ENCODE measurements at regions of chrX and their contacts with region 1.

Region 1: GRCh38 chrX:43958529-43958928 is 14.7 kb downstream of the NDP start:
- DNase-seq: peak; percentile 77
- H3K4me3 ChIP-seq: no peak overlapping the region
- H3K27ac ChIP-seq: no peak overlapping the region
- H3K4me1 ChIP-seq: no peaks in the 10 kb centered on the region
- H3K27me3 ChIP-seq: no peaks in the 10 kb centered on the region
- CTCF ChIP-seq: peak; percentile 54 to 56
- POLR2A ChIP-seq: no peak

Region 2: DNA sequence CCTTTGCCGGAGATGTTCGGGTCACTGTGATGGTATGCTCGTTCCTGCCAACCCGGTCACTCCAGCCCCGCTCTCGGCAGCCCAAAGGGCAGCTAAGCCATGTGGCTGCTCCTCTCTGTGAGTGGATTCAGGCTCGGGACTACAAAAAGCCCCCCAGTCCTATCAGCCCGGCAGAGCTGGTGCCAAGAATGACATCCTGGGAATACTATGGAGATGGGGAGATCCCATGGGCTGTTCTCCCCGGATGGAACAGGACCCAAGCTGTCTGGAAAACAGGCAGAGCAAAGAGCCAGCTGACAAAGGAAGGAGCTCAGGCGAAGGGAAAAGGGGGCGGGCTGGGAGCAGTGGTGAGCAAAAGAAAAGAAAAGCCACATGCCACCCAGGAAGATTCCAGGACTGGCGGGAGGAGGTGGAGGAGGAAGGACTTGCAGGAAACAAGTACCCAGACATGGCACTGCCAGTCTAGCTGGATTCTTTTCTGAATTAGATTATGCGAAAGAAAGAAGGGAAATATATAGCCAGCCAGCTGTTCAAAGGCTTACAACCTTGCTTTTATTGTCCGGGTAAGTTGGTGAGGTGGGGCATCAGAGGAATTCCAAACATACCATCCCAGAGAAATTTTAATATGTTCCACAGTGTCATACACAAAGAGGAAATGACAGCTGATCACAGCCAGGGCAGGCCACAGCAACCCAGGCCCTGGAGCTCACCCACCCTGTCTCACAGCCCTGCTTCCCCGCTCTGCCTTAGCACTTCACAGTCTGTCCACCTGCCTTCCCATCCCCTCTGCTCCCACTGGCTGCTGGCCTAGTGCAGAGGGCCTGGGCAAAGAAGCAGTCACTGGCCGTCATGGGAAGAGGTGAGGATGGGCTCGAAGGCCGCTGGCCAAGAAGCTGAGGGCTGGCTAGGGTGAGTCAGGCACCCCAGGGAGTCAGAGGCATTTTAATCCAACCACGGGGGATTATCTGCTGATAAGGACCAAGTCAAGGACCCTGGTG is 11.3 kb after region 1 on chrX:
- CTCF ChIA-PET with region 1: interaction called, 14 read pairs
- POLR2A ChIA-PET with region 1: no interaction called
- dilution Hi-C with region 1: no loop called
- intact Hi-C with region 1: no loop called
- DNase-seq: no peak
- H3K4me3 ChIP-seq: no peak overlapping the region
- H3K27ac ChIP-seq: no peak overlapping the region
- H3K4me1 ChIP-seq: peaks cover 17% of the 10 kb centered on the region
- H3K27me3 ChIP-seq: no peaks in the 10 kb centered on the region
- CTCF ChIP-seq: no peak
- POLR2A ChIP-seq: no peak

Region 3: GRCh38 chrX:44035576-44035975 is 77.0 kb after region 1 on chrX:
- CTCF ChIA-PET with region 1: interaction called, 11 read pairs
- POLR2A ChIA-PET with region 1: no interaction called
- dilution Hi-C with region 1: no loop called
- intact Hi-C with region 1: no loop called
- DNase-seq: no peak
- H3K4me3 ChIP-seq: no peak overlapping the region
- H3K27ac ChIP-seq: no peak overlapping the region
- H3K4me1 ChIP-seq: peaks cover 10% of the 10 kb centered on the region
- H3K27me3 ChIP-seq: no peaks in the 10 kb centered on the region
- CTCF ChIP-seq: no peak
- POLR2A ChIP-seq: no peak

Region 4: GRCh38 chrX:44542567-44543325 is 584.2 kb after region 1 on chrX and contains the start of gene FUNDC1:
- CTCF ChIA-PET with region 1: interaction called, 3 read pairs
- POLR2A ChIA-PET with region 1: no interaction called
- dilution Hi-C with region 1: no loop called
- intact Hi-C with region 1: loop called (anchors 5 kb)
- DNase-seq: peak; percentile 96
- H3K4me3 ChIP-seq: peak within 1 kb of the TSS; percentile 56 to 72 (median 65)
- H3K27ac ChIP-seq: peak within 1 kb of the TSS; percentile 76
- H3K4me1 ChIP-seq: peaks cover 12% of the 10 kb centered on the region
- H3K27me3 ChIP-seq: no peaks in the 10 kb centered on the region
- CTCF ChIP-seq: no peak
- POLR2A ChIP-seq: no peak
- total RNA-seq, gene FUNDC1: 9.7 and 15.4 TPM in 2 replicates